ENCODE measurements at regions of chr1 and their contacts with region 1.

Region 1: DNA sequence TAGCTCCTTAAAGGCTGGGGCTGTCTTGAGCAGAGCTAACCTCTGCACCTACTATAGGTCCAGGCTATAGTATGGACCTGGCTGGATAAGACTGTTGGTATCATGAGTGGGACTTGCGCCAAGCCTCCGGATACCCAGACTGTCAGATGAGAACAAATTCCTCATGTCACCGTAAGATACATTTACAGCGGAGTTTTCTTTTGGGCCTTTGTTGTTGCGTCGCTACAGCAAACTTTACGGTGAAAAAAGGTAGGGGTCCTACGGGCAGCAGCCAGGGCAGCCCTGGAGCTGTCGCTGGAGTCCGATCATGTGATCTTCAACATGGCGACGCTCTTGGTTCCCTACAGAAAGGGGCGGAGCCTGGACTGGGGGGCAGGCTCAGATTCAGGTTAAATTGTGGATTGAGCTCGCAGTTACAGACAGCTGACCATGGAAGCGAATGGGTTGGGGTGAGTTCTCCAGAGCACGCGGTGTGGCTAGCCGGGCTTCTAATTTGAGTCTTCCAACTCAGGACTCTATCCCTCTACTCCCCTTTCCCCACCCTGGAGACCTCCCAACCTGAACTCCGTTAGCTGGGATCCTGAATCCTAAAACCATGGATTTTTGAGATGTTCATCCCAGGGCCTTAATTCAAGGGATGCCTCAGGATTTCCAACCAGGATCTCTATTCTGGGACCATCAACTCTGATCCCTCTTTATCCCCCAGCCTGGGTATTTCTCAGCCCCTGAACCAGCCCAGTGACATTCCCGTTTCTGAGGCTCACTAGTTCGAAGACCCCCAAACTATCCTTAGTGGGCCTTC is at the start of gene UROD:
- DNase-seq: peak; percentile 90 to 93 (median 92)
- H3K4me3 ChIP-seq: peak within 1 kb of the TSS; percentile 77 to 96 (median 90)
- H3K4me3 Mint-ChIP-seq: peak within 1 kb of the TSS; percentile 86 to 89
- H3K27ac ChIP-seq: peak within 1 kb of the TSS; percentile 60 to 83
- H3K27ac Mint-ChIP-seq: peak within 1 kb of the TSS; percentile 72 to 92 (median 88)
- H3K4me1 ChIP-seq: peaks cover 33 to 51% of the 10 kb centered on the region in 2 donors
- H3K4me1 Mint-ChIP-seq: peaks cover 57% of the 10 kb centered on the region
- H3K27me3 ChIP-seq: no peaks in the 10 kb centered on the region
- H3K27me3 Mint-ChIP-seq: no peaks in the 10 kb centered on the region
- CTCF ChIP-seq: no peak
- polyA plus RNA-seq, gene UROD: 98.2 to 115 (median 108) TPM

Region 2: DNA sequence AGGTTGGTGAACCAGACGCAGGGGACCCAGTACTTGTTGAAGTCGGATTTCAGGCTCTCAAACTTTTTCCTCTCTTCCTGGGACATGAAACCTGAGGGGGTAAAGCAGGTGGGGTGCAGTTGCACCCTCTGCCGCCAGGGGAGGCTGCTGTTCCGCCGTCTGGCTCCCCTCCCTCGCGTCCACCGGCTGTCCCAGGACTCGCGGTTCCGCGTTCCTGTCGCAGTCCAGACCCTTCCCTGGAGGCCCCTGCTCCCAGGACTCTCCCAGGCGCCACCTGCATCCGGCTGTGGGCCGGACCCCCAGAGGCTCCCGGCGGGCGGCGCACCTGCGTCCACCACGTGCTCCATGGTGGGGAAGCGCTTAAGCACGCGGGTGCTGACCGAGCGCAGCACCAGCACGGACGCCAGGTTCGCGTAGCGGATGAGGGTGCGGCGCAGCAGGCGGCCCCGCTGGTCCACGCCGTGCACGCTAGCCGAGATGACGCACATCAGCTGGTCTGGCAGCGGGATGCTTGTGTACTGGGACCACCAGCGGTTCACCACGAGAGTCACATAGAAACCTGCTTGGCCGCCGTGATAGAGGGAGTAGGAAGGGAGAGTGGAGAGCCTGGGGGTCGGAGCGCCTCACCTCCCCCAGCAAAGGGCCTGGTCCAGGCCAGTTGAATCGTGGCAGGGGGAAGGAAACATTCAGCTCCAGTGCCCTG is 225.7 kb before region 1 on chr1:
- intact Hi-C with region 1: loop called in 1 of 2 experiments (anchors 10 kb)
- DNase-seq: peak; percentile 60 to 70 (median 70)
- H3K4me3 ChIP-seq: peak overlapping the region in 2 of 3 experiments; percentile 41 to 74
- H3K4me3 Mint-ChIP-seq: peak overlapping the region; percentile 72 to 92
- H3K27ac ChIP-seq: no peak overlapping the region
- H3K27ac Mint-ChIP-seq: peak overlapping the region in 4 of 7 donors; percentile 31 to 85 (median 64)
- H3K4me1 ChIP-seq: peaks cover 23 to 24% of the 10 kb centered on the region in 2 donors
- H3K4me1 Mint-ChIP-seq: peaks cover 26% of the 10 kb centered on the region
- H3K27me3 ChIP-seq: peaks cover 0 to 3% of the 10 kb centered on the region in 2 donors
- H3K27me3 Mint-ChIP-seq: peaks cover 7 to 14% (median 12%) of the 10 kb centered on the region in 3 donors
- CTCF ChIP-seq: peak; percentile 100

Region 3: GRCh38 chr1:44985747-44986359 is 26.2 kb before region 1 on chr1:
- intact Hi-C with region 1: loop called in 1 of 2 experiments (anchors 2 kb)
- DNase-seq: no peak
- H3K4me3 ChIP-seq: peak overlapping the region; percentile 53 to 78 (median 63)
- H3K4me3 Mint-ChIP-seq: peak overlapping the region; percentile 98
- H3K27ac ChIP-seq: peak overlapping the region; percentile 65 to 78
- H3K27ac Mint-ChIP-seq: peak overlapping the region; percentile 89 to 98 (median 94)
- H3K4me1 ChIP-seq: peaks cover 14 to 21% of the 10 kb centered on the region in 2 donors
- H3K4me1 Mint-ChIP-seq: peaks cover 16% of the 10 kb centered on the region
- H3K27me3 ChIP-seq: no peaks in the 10 kb centered on the region
- H3K27me3 Mint-ChIP-seq: no peaks in the 10 kb centered on the region
- CTCF ChIP-seq: no peak

Region 4: GRCh38 chr1:44999232-44999631 is 12.8 kb before region 1 on chr1:
- intact Hi-C with region 1: no loop called
- DNase-seq: no peak
- H3K4me3 ChIP-seq: no peak overlapping the region
- H3K4me3 Mint-ChIP-seq: no peak overlapping the region
- H3K27ac ChIP-seq: no peak overlapping the region
- H3K27ac Mint-ChIP-seq: no peak overlapping the region
- H3K4me1 ChIP-seq: peaks cover 15 to 25% of the 10 kb centered on the region in 2 donors
- H3K4me1 Mint-ChIP-seq: peaks cover 25% of the 10 kb centered on the region
- H3K27me3 ChIP-seq: no peaks in the 10 kb centered on the region
- H3K27me3 Mint-ChIP-seq: peaks cover 0 to 1% (median 0%) of the 10 kb centered on the region in 3 donors
- CTCF ChIP-seq: no peak

Region 5: GRCh38 chr1:45490626-45491486 is 478.8 kb after region 1 on chr1 and contains the start of gene TESK2:
- intact Hi-C with region 1: loop called in 1 of 2 experiments (anchors 5 kb)
- DNase-seq: peak; percentile 99 to 100 (median 99)
- H3K4me3 ChIP-seq: peak within 1 kb of the TSS; percentile 72 to 99 (median 97)
- H3K4me3 Mint-ChIP-seq: no peak within 1 kb of the TSS
- H3K27ac ChIP-seq: peak within 1 kb of the TSS; percentile 52 to 76
- H3K27ac Mint-ChIP-seq: peak within 1 kb of the TSS in 1 of 7 donors; percentile 21
- H3K4me1 ChIP-seq: peaks cover 23 to 28% of the 10 kb centered on the region in 2 donors
- H3K4me1 Mint-ChIP-seq: peaks cover 5% of the 10 kb centered on the region
- H3K27me3 ChIP-seq: no peaks in the 10 kb centered on the region
- H3K27me3 Mint-ChIP-seq: peaks cover 0 to 3% (median 3%) of the 10 kb centered on the region in 3 donors
- CTCF ChIP-seq: no peak
- polyA plus RNA-seq, gene TESK2: 3.9 to 13.1 (median 4.1) TPM

Region 6: GRCh38 chr1:45583264-45583665 is 571.2 kb after region 1 on chr1:
- intact Hi-C with region 1: loop called in 1 of 2 experiments (anchors 10 kb)
- DNase-seq: peak; percentile 97 to 99 (median 97)
- H3K4me3 ChIP-seq: peak overlapping the region; percentile 74 to 99 (median 97)
- H3K4me3 Mint-ChIP-seq: peak overlapping the region; percentile 98 to 99
- H3K27ac ChIP-seq: peak overlapping the region; percentile 83 to 84
- H3K27ac Mint-ChIP-seq: peak overlapping the region; percentile 94 to 98 (median 97)
- H3K4me1 ChIP-seq: peaks cover 40 to 42% of the 10 kb centered on the region in 2 donors
- H3K4me1 Mint-ChIP-seq: peaks cover 39% of the 10 kb centered on the region
- H3K27me3 ChIP-seq: no peaks in the 10 kb centered on the region
- H3K27me3 Mint-ChIP-seq: peaks cover 0 to 2% (median 0%) of the 10 kb centered on the region in 3 donors
- CTCF ChIP-seq: no peak